ENCODE measurements at regions of chr2 and their contacts with region 1.

Region 1: DNA sequence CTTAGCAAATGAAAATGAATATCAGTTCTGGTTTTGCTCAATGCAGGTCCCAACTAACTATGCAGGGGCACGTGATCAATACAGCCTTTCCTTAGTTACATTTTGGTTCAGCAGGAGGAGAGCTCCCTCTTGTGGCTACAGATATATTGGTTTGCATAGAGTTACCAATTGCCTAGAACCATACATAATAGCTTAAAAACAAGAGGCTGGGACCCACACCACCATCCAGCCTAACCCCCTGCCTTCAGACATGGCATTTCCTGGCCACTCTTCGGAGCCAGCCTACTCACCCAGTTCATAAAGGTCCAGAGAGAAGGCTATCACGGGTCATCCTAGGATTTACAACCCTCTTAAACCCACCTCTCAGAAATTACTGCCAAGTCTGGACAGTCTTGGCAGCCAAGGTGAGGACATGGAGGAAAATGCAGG is 10.5 kb downstream of the CCDC93 start:
- DNase-seq: peak; percentile 69
- CTCF ChIP-seq: peak; percentile 82

Region 2: DNA sequence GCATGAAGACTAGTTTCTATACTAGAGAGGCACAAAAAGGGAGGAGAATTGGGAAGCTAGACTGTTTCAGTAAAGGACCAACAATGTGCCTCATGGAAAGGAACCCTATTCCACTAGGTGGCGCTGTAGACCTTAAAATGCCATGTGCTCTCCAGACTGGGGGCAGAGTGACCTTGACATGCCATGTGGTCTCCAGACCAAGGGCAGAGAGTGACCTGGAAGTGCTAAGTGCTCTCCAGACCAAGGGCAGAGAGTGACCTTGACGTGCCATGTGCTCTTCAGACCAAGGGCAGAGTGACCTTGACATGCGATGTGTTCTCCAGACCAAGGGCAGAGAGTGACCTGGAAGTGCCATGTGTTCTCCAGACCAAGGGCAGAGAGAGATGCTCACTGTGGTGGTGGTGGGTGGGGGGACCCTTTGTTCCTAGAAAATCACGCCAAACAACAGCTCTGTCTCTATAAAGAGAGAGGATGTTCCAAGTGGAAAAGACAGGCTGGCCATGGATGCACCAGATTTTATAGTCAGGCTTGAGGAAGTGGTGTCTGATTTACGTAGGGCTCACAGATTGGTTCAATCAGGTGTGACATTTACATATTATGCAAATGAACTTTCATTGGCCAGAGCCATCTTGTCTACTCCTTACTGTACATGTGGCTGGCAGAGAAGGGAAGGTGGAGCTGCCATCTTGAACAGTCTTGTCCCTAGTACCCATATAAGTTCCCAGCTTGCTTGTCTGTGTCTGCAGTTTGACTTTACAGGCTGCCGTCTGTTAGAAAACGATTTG is 532.9 kb before region 1 on chr2:
- CTCF ChIA-PET with region 1: interaction called, 20 read pairs
- POLR2A ChIA-PET with region 1: no interaction called
- DNase-seq: no peak
- CTCF ChIP-seq: peak; percentile 40

Region 3: DNA sequence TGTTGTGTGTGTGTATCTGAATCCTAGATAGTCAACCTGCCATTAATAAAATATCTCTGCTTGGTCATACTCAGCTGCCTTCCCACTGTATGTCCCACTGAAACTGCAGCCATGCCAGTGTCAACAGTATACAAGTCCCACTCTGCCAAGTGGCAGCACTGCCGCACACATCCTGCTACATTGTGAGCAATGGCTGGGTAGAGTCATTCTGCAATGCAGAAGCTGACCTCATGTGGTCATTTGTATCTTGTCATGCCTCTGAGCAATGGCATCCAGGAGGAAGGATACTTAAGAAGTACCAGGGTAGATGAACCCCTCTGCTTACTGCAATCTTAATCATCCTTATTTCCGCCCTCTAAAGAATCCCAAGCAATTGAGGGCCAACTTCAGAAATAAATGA is 491.1 kb before region 1 on chr2:
- CTCF ChIA-PET with region 1: no interaction called
- POLR2A ChIA-PET with region 1: no interaction called
- DNase-seq: no peak
- CTCF ChIP-seq: no peak

Region 4: GRCh38 chr2:117835990-117836760 is 167.2 kb before region 1 on chr2:
- CTCF ChIA-PET with region 1: interaction called, 32 read pairs
- POLR2A ChIA-PET with region 1: no interaction called
- DNase-seq: peak; percentile 78
- CTCF ChIP-seq: peak; percentile 79

Region 5: GRCh38 chr2:117958186-117958585 is 45.2 kb before region 1 on chr2:
- CTCF ChIA-PET with region 1: interaction called, 25 read pairs
- POLR2A ChIA-PET with region 1: interaction called, 3 read pairs
- DNase-seq: no peak
- CTCF ChIP-seq: no peak

Region 6: GRCh38 chr2:117980783-117981676 is 22.4 kb before region 1 on chr2:
- CTCF ChIA-PET with region 1: interaction called, 151 read pairs
- POLR2A ChIA-PET with region 1: interaction called, 3 read pairs
- DNase-seq: no peak
- CTCF ChIP-seq: no peak

Region 7: GRCh38 chr2:118032169-118033013 is 29.0 kb after region 1 on chr2:
- CTCF ChIA-PET with region 1: interaction called, 11 read pairs
- POLR2A ChIA-PET with region 1: no interaction called
- DNase-seq: peak; percentile 57
- CTCF ChIP-seq: peak; percentile 84

Measured in GM10248 (cell line).